ENCODE measurements at regions of chr6 and their contacts with region 1.

Region 1: GRCh38 chr6:26156076-26156849 is 69.0 kb downstream of the HFE start:
- DNase-seq: peak; percentile 87
- ATAC-seq: peak; percentile 59
- H3K4me3 Mint-ChIP-seq: peak overlapping the region; percentile 88
- H3K27ac Mint-ChIP-seq: peak overlapping the region; percentile 99
- H3K4me1 Mint-ChIP-seq: peaks cover 45% of the 10 kb centered on the region
- H3K27me3 Mint-ChIP-seq: no peaks in the 10 kb centered on the region
- CTCF ChIP-seq: no peak

Region 2: DNA sequence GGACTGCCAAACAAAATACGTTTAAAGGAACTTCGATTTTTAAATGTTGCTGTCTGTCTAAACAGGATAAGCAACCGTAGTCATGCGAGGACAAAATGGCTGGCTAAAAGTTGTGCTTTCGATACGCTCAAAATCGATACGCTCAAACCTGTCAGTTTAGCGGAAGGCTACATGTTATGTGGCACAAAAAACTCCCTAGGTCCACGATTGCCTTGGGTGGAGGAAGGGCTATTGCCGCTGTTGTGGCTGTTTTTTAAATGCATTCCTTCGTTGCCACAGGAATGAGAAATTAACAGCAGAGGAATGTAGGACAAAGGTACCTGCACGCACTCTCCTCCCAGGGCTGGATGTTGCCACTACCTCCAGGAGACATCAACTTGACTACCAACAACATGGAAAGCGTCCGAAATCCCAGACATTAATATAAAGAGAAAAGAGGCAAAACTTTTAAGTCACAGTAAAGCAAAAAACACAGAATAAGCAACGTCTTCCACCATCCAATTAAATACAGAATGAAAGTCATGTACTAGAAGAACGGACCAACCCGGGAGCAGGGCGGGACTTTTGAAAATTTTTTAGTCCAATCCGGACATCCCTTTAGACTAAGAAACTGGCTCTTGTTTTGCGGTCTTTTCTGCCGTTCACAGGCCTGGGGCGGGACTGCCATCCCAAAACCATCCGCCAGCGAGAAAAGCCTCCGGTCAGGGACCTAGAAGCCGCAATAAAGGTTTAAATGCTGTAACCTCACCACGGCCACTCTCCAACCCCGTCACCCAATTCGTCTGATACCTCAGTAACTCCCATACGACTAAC is 101.2 kb before region 1 on chr6:
- CTCF ChIA-PET with region 1: no interaction called
- POLR2A ChIA-PET with region 1: interaction called, 167 read pairs
- intact Hi-C with region 1: loop called (anchors 1 kb)
- DNase-seq: peak; percentile 63
- ATAC-seq: peak; percentile 65
- H3K4me3 Mint-ChIP-seq: peak overlapping the region; percentile 97
- H3K27ac Mint-ChIP-seq: peak overlapping the region; percentile 100
- H3K4me1 Mint-ChIP-seq: peaks cover 20% of the 10 kb centered on the region
- H3K27me3 Mint-ChIP-seq: no peaks in the 10 kb centered on the region
- CTCF ChIP-seq: no peak

Region 3: GRCh38 chr6:26136321-26136720 is 19.9 kb before region 1 on chr6:
- CTCF ChIA-PET with region 1: no interaction called
- POLR2A ChIA-PET with region 1: interaction called, 56 read pairs
- intact Hi-C with region 1: no loop called
- DNase-seq: no peak
- ATAC-seq: no peak
- H3K4me3 Mint-ChIP-seq: no peak overlapping the region
- H3K27ac Mint-ChIP-seq: no peak overlapping the region
- H3K4me1 Mint-ChIP-seq: peaks cover 51% of the 10 kb centered on the region
- H3K27me3 Mint-ChIP-seq: no peaks in the 10 kb centered on the region
- CTCF ChIP-seq: no peak

Region 4: DNA sequence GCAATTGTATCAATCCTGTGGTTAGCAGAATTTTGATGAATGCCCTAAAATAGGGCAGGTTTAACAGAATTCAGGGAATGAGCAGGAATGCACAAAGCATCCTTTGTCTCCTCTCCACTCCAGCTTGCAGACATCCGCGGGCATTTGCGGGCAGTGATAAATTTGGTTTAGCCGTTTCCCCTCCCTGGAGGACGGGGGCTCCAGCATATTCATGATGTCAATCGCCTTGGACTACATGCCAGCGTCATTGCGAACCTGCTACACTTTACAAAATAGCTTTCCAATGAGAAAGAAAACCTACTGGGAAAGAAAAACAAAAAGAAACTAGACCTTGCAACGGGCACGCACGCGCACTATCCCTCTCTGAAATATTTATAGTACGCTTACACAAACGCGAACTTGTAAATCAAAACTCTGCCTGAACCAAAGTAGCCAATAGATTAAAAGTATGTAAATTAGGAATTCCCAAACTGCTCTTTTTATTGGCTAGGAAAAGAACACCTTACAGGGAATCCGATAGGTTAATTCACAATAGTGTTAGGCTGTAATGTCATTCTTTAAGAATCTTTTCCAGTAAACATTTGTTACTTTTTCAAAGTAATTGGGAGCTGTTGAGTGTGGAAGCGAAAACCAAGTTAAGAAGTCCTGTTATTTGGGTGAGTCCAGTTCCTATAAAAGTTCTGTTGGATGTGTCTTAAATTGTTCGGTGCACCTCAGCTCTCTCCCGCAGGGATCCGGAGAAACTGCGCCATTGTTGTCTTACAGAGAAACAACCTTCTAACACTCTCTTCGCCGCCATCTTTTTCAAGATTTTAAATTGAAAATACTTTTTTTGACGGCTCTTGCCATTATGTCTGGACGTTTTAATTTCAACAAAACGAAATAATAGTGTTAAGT is 67.6 kb after region 1 on chr6:
- CTCF ChIA-PET with region 1: no interaction called
- POLR2A ChIA-PET with region 1: interaction called, 41 read pairs
- intact Hi-C with region 1: no loop called
- DNase-seq: no peak
- ATAC-seq: peak; percentile 87
- H3K4me3 Mint-ChIP-seq: no peak overlapping the region
- H3K27ac Mint-ChIP-seq: no peak overlapping the region
- H3K4me1 Mint-ChIP-seq: peaks cover 4% of the 10 kb centered on the region
- H3K27me3 Mint-ChIP-seq: no peaks in the 10 kb centered on the region
- CTCF ChIP-seq: no peak

Region 5: GRCh38 chr6:26473758-26474438 is 317.6 kb after region 1 on chr6:
- CTCF ChIA-PET with region 1: no interaction called
- POLR2A ChIA-PET with region 1: interaction called, 13 read pairs
- intact Hi-C with region 1: no loop called
- DNase-seq: peak; percentile 49
- ATAC-seq: peak; percentile 94
- H3K4me3 Mint-ChIP-seq: peak overlapping the region; percentile 96
- H3K27ac Mint-ChIP-seq: peak overlapping the region; percentile 100
- H3K4me1 Mint-ChIP-seq: peaks cover 70% of the 10 kb centered on the region
- H3K27me3 Mint-ChIP-seq: no peaks in the 10 kb centered on the region
- CTCF ChIP-seq: no peak

Region 6: GRCh38 chr6:27809939-27810767 is 1653.9 kb after region 1 on chr6:
- CTCF ChIA-PET with region 1: no interaction called
- POLR2A ChIA-PET with region 1: interaction called, 45 read pairs
- intact Hi-C with region 1: no loop called
- DNase-seq: peak; percentile 68
- ATAC-seq: peak; percentile 59
- H3K4me3 Mint-ChIP-seq: peak overlapping the region; percentile 93
- H3K27ac Mint-ChIP-seq: peak overlapping the region; percentile 97
- H3K4me1 Mint-ChIP-seq: peaks cover 59% of the 10 kb centered on the region
- H3K27me3 Mint-ChIP-seq: no peaks in the 10 kb centered on the region
- CTCF ChIP-seq: no peak

Measured in activated B cell treated with CpG ODN at 0.5 μM for 24 hours (primary cell).